PC-3 (cell line): ENCODE measurements at regions of chr7 and their contacts with region 1.

Region 1: DNA sequence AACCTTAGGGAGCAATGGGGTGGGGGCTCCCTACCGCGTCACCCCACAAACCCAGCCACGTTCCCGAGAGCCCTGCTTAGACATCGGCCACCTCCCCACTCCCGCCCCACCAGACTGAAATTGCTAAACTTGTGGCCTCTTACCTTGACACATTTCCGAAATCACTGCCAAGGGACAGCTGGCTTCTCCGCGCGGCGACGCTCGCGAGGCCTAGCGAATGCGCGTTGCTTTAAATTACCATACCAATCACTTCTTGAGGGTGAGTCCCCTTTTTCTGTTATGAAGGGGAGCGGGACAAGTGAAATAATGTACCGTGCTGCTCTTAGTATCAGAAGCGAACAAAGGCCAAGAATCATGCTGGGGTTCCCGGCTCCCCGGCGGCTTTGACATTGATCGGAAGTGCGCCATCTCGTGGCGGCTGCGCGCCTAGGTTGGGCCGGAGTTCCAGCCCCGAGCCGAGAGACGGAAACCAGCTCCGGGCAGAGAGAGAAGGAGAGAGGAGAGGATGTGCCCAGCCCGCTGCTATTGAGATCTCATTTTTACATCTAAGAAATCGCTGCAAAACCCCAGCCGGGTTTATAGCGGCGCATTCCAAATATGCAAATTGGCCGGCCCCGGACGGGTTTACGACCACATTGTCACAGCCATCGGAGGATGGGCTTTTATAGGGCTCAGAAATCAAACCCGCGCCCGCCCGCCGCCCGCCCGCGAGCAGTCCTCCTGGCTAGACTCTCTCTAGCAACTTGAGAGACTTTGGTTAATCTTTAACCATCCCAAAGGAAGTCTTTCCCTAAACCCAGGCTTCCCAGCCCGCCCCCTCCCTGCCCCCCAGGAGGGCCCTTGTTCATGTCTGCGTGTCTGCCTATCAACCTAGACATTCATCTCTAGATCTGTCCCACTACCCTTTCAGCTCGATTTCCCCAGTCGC is 5.3 kb downstream of the HOXA11 start:
- DNase-seq: peak; percentile 90
- ATAC-seq: peak; percentile 19
- H3K4me3 ChIP-seq: peak overlapping the region; percentile 84
- H3K27ac ChIP-seq: peak overlapping the region; percentile 97
- H3K4me1 ChIP-seq: peaks cover 41% of the 10 kb centered on the region
- H3K27me3 ChIP-seq: no peaks in the 10 kb centered on the region
- CTCF ChIP-seq: peak; percentile 91

Region 2: DNA sequence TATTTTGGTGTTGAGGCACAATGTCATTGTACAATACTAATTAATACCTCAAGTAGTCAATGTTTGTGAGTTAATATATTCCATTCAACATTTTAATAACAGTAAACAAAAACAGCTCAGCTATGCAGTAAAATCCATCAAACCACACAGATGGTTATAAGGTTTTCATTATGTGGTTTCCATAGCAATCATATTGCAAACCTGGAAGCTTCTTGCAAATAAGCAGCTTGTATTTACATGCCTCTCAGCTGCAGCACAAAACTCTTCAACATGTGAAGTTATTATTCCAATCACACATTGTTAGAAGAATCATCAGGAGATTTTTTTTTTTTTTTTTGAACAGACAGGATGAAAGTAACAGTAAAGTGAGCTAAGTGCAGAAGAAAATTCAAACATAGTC is 485.6 kb before region 1 on chr7:
- CTCF ChIA-PET with region 1: interaction called, 10 read pairs
- POLR2A ChIA-PET with region 1: no interaction called
- intact Hi-C with region 1: no loop called
- DNase-seq: no peak
- ATAC-seq: no peak
- H3K4me3 ChIP-seq: no peak overlapping the region
- H3K27ac ChIP-seq: no peak overlapping the region
- H3K4me1 ChIP-seq: peaks cover 15% of the 10 kb centered on the region
- H3K27me3 ChIP-seq: no peaks in the 10 kb centered on the region
- CTCF ChIP-seq: no peak

Region 3: GRCh38 chr7:27697861-27698430 is 518.2 kb after region 1 on chr7:
- CTCF ChIA-PET with region 1: no interaction called
- POLR2A ChIA-PET with region 1: interaction called, 12 read pairs
- intact Hi-C with region 1: no loop called
- DNase-seq: peak; percentile 28
- ATAC-seq: peak; percentile 43
- H3K4me3 ChIP-seq: no peak overlapping the region
- H3K27ac ChIP-seq: no peak overlapping the region
- H3K4me1 ChIP-seq: peaks cover 9% of the 10 kb centered on the region
- H3K27me3 ChIP-seq: no peaks in the 10 kb centered on the region
- CTCF ChIP-seq: no peak